MCF 10A (cell line): ENCODE measurements at regions of chr19 and their contacts with region 1.

Region 1: GRCh38 chr19:34220472-34221063 is 33.8 kb upstream of the GARRE1 start:
- DNase-seq: peak; percentile 77
- H3K4me3 Mint-ChIP-seq: no peak overlapping the region
- H3K27ac Mint-ChIP-seq: no peak overlapping the region
- H3K4me1 Mint-ChIP-seq: peaks cover 17% of the 10 kb centered on the region
- H3K27me3 Mint-ChIP-seq: no peaks in the 10 kb centered on the region
- CTCF ChIP-seq: peak; percentile 62

Region 2: DNA sequence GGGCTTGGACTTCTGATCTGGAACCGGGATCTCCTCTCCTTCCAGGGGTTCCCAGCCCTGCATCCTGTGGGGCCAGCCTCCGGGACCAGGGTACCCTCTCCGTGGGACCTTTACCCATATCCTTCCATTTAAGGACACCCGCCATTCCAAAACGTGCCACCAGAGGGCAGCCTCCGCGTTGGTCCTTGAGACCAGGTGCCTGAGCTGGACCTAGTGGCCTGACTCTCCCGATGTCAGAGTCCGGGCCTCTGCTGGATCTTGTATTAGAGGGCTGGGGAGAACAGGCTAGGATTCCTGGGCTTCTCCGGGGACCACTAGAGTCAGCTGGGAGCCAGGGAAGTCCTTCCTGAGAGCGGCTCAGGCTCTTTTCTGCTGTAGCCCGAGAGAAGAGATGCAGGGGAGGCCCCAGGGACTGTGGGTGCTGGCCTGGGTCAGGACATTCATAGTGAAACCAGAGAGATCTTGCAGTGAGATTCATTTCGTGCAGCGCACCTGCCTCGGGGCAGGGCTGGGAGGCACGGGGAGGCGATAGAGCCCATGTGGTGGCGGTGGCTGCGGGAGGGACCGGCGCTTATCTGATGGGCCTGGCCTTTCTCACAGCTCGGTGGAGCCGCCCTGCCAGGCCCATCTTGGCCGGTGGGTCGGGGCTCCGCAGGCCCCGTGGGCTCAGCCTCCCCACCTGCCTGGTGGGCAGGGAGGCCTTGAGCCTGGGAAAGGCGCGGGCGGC is 985.1 kb before region 1 on chr19:
- CTCF ChIA-PET with region 1: no interaction called
- POLR2A ChIA-PET with region 1: no interaction called
- intact Hi-C with region 1: no loop called
- DNase-seq: peak; percentile 80
- H3K4me3 Mint-ChIP-seq: no peak overlapping the region
- H3K27ac Mint-ChIP-seq: no peak overlapping the region
- H3K4me1 Mint-ChIP-seq: no peaks in the 10 kb centered on the region
- H3K27me3 Mint-ChIP-seq: no peaks in the 10 kb centered on the region
- CTCF ChIP-seq: peak; percentile 86

Region 3: DNA sequence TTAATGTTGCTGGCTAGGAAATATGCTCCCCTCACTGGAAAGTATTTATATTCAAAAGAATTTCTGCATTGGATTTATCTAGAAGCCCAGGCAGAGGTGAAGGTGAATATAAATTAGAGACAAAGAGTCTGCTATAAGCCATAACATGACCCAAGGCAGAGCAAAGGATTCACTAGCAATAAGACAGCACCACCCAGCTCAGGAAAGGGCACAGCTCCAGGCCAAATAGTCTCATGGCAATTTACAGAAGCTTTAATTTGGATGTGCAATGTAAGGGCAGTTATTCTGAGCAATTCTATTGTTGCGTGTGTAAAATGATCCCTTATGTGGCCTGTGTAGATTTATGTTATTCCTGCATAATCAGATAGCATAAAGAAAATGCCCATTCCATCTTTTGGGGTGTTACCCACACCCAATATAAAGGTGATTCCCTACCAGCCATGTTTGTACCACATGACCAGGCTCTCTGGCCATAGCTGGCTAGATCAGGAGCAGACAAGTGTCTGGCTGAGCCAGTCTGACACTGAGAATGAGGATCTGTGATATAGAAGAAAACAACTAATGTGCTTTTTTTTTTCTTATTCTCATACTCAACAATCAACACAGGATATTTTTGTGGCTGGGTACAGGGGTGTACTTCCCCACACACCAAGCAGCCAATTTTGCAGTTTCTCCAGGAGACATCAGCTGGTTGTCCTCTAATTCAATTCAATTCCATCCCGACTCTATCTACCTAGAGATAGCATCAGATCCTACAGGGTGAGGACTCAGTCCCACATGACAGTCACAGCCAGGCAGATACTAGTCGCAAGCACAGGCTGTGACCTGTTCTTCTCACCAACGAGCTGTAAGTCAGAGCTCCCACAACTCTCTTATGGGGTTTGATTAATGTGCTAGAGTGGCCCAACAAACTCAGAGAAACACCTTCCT is 242.5 kb before region 1 on chr19:
- CTCF ChIA-PET with region 1: no interaction called
- POLR2A ChIA-PET with region 1: no interaction called
- intact Hi-C with region 1: no loop called
- DNase-seq: no peak
- H3K4me3 Mint-ChIP-seq: no peak overlapping the region
- H3K27ac Mint-ChIP-seq: no peak overlapping the region
- H3K4me1 Mint-ChIP-seq: no peaks in the 10 kb centered on the region
- H3K27me3 Mint-ChIP-seq: peaks cover 11% of the 10 kb centered on the region
- CTCF ChIP-seq: no peak

Region 4: GRCh38 chr19:34109601-34110000 is 111.0 kb before region 1 on chr19:
- CTCF ChIA-PET with region 1: no interaction called
- POLR2A ChIA-PET with region 1: no interaction called
- intact Hi-C with region 1: no loop called
- DNase-seq: no peak
- H3K4me3 Mint-ChIP-seq: no peak overlapping the region
- H3K27ac Mint-ChIP-seq: no peak overlapping the region
- H3K4me1 Mint-ChIP-seq: no peaks in the 10 kb centered on the region
- H3K27me3 Mint-ChIP-seq: peaks cover 10% of the 10 kb centered on the region
- CTCF ChIP-seq: no peak

Region 5: DNA sequence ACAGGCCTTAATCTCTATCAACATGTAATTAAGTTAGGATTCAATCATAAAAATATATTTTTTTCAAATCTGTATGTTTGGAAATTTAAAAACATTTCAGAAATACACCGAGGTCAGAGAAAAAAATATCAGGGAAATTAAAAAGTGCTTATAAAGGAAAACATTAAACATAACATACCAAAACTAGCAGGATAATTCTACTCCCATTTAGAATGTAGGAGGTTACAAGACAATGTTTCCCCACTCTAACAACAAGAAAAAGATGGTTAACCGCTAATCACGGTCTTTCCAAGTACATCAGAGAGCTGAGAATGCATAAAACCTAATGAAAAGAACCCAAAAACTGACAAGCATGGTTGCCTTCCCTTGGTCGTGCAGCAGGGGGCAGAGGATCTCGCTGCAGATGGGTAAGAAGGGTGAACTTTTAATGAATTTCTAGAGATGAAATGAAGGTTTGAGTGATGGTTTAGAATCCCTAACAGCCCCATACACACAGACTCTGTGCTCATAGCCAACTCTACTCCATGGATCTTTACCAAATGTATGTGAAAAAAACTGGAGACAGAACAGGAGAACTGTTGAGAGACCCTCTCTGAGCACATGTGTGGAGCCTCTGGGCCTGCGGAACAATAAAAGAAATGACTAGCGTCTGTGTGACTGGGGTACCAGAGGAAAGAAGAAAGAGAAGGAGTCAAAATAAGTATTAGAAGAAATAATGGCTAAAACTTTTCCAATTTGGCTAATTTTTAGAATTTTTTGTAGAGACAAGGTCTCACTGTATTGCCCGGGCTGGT is 99.5 kb before region 1 on chr19:
- CTCF ChIA-PET with region 1: interaction called, 4 read pairs
- POLR2A ChIA-PET with region 1: no interaction called
- intact Hi-C with region 1: loop called (anchors 1 kb)
- DNase-seq: peak; percentile 66
- H3K4me3 Mint-ChIP-seq: no peak overlapping the region
- H3K27ac Mint-ChIP-seq: no peak overlapping the region
- H3K4me1 Mint-ChIP-seq: no peaks in the 10 kb centered on the region
- H3K27me3 Mint-ChIP-seq: peaks cover 53% of the 10 kb centered on the region
- CTCF ChIP-seq: peak; percentile 75

Region 6: GRCh38 chr19:34171877-34172660 is 48.5 kb before region 1 on chr19 and contains the start of gene LSM14A:
- CTCF ChIA-PET with region 1: interaction called, 4 read pairs
- POLR2A ChIA-PET with region 1: no interaction called
- intact Hi-C with region 1: loop called (anchors 2 kb)
- DNase-seq: peak; percentile 90
- H3K4me3 Mint-ChIP-seq: peak within 1 kb of the TSS; percentile 86
- H3K27ac Mint-ChIP-seq: peak within 1 kb of the TSS; percentile 96
- H3K4me1 Mint-ChIP-seq: peaks cover 8% of the 10 kb centered on the region
- H3K27me3 Mint-ChIP-seq: peaks cover 17% of the 10 kb centered on the region
- CTCF ChIP-seq: no peak
- total RNA-seq, gene LSM14A: 93.7 and 100 TPM in 2 replicates

Region 7: DNA sequence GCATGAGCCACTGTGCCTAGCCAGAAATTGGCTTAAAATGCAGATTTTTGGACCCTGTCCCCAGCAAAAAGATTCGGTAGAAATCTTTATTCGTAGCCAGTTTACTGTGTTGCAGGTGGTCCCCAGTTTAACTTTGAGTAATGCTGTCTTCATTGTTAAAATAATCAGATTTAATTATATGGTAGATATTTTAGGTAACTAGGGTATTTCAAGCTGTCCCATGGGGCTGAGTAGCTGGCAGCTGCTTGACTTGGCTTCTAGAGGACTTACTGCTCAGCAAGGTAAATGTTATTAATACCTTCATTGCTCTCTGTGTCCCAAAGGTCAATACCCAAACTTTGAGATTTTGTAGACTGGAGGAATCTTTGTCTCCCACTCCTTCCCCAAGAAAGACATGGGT is 27.1 kb before region 1 on chr19:
- CTCF ChIA-PET with region 1: interaction called, 21 read pairs
- POLR2A ChIA-PET with region 1: no interaction called
- intact Hi-C with region 1: no loop called
- DNase-seq: no peak
- H3K4me3 Mint-ChIP-seq: no peak overlapping the region
- H3K27ac Mint-ChIP-seq: no peak overlapping the region
- H3K4me1 Mint-ChIP-seq: peaks cover 20% of the 10 kb centered on the region
- H3K27me3 Mint-ChIP-seq: no peaks in the 10 kb centered on the region
- CTCF ChIP-seq: no peak

Region 8: DNA sequence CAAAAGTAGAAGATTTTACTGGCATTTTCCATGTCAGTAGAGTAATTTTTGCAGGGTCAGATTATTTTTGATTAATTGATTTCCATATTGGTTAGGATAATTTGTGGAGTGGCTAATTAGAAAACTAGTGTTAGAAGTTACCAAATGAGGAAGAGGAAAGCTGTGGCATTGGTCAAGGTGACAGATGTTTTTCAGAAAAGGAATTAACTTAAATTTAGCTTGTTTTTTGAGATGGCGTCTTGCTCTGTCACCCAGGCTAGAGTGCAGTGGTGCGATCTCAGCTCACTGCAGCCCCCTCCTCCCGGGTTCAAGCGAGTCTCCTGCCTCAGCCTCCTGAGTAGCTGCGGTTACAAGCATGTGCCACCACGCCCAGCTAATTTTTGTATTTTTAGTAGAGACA is 19.4 kb before region 1 on chr19:
- CTCF ChIA-PET with region 1: interaction called, 10 read pairs
- POLR2A ChIA-PET with region 1: interaction called, 3 read pairs
- intact Hi-C with region 1: no loop called
- DNase-seq: no peak
- H3K4me3 Mint-ChIP-seq: no peak overlapping the region
- H3K27ac Mint-ChIP-seq: no peak overlapping the region
- H3K4me1 Mint-ChIP-seq: no peaks in the 10 kb centered on the region
- H3K27me3 Mint-ChIP-seq: no peaks in the 10 kb centered on the region
- CTCF ChIP-seq: no peak

Region 9: DNA sequence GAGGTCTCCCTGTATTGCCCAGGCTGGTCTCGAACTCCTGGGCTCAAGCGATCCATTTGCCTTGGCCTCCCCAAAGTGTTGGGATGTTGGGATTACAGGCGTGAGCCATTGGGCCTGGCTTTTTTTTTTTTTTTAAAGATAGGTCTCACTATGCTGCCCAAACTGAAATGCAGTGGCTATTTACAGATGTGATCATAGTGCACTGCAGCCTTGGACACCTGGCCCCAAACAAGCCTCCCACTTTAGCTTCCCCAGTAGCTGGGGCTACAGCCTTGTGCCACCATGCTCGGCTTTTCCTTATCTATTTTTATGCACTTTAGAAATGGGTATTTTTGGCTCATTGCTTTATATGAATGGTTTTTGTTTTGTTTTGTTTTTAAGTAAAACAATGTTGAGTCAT is 10.8 kb before region 1 on chr19:
- CTCF ChIA-PET with region 1: interaction called, 17 read pairs
- POLR2A ChIA-PET with region 1: interaction called, 3 read pairs
- intact Hi-C with region 1: no loop called
- DNase-seq: no peak
- H3K4me3 Mint-ChIP-seq: no peak overlapping the region
- H3K27ac Mint-ChIP-seq: no peak overlapping the region
- H3K4me1 Mint-ChIP-seq: no peaks in the 10 kb centered on the region
- H3K27me3 Mint-ChIP-seq: no peaks in the 10 kb centered on the region
- CTCF ChIP-seq: no peak

Region 10: GRCh38 chr19:34274827-34275625 is 54.5 kb after region 1 on chr19:
- CTCF ChIA-PET with region 1: no interaction called
- POLR2A ChIA-PET with region 1: no interaction called
- intact Hi-C with region 1: no loop called
- DNase-seq: peak; percentile 32
- H3K4me3 Mint-ChIP-seq: no peak overlapping the region
- H3K27ac Mint-ChIP-seq: peak overlapping the region; percentile 8
- H3K4me1 Mint-ChIP-seq: peaks cover 30% of the 10 kb centered on the region
- H3K27me3 Mint-ChIP-seq: no peaks in the 10 kb centered on the region
- CTCF ChIP-seq: no peak